ENCODE measurements at regions of chr2 and their contacts with region 1.

Region 1: DNA sequence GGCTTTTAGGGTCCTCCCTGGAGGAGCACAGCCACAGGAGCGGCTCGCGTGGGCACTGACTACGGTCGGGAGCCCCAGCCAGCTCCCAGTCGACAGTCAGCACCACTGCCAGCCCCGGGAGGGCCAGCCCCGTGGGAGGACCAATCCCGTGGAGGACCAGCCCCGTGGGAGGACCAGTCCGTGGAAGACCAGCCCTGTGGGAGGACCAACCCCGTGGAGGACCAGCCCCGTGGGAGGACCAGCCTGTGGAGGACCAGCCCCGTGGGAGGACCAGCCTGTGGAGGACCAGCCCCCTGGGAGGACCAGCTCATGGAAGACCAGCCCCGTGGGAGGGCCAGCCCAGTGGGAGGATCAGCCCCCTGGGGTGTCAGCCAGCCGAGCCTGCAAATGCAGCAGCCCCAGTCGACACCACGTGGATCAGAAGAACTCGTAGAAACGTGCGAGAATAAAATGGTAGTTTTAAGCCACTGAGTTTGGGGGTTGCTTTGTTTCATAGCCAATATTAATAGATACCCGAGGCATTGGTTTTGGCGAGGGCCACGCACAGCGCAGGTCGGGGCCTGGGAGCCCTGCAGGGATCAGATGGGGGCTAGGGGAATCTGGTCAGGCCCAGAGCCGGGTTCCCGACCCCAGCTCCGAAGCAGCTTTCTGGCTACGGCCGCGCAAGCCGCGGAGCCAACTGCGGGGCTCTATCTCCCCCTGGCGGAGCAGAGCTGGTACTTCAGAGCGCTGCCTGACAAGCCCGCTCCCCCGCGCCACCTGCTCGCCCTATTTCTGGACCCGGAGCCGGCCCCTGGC is 73.0 kb downstream of the TEX51 start:
- DNase-seq: peak; percentile 56 to 90
- H3K4me3 ChIP-seq: no peak overlapping the region
- H3K27ac ChIP-seq: no peak overlapping the region
- H3K4me1 ChIP-seq: peaks cover 0 to 17% (median 5%) of the 10 kb centered on the region in 4 experiments; a peak in 5 of 7 replicates
- H3K27me3 ChIP-seq: peaks cover 0 to 9% (median 5%) of the 10 kb centered on the region in 4 experiments; a peak in 3 of 7 replicates
- CTCF ChIP-seq: peak; percentile 87 to 95 (median 89)
- EP300 ChIP-seq: no peak
- POLR2A ChIP-seq: no peak
- RAD21 ChIP-seq: peak; percentile 96 to 99

Region 2: GRCh38 chr2:126776692-126777619 is 194.7 kb before region 1 on chr2:
- CTCF ChIA-PET with region 1: interaction called, 21 read pairs
- POLR2A ChIA-PET with region 1: no interaction called
- DNase-seq: peak; percentile 36 to 94
- H3K4me3 ChIP-seq: peak overlapping the region; percentile 41 to 81 (median 72)
- H3K27ac ChIP-seq: no peak overlapping the region
- H3K4me1 ChIP-seq: peaks cover 0 to 4% (median 2%) of the 10 kb centered on the region in 4 experiments; a peak in 3 of 7 replicates
- H3K27me3 ChIP-seq: peaks cover 0 to 3% (median 1%) of the 10 kb centered on the region in 4 experiments; a peak in 3 of 7 replicates
- CTCF ChIP-seq: peak; percentile 88 to 95 (median 93)
- EP300 ChIP-seq: no peak
- POLR2A ChIP-seq: no peak
- RAD21 ChIP-seq: peak; percentile 98

Region 3: GRCh38 chr2:126839796-126840195 is 131.9 kb before region 1 on chr2:
- CTCF ChIA-PET with region 1: interaction called, 20 read pairs
- POLR2A ChIA-PET with region 1: no interaction called
- DNase-seq: no peak
- H3K4me3 ChIP-seq: no peak overlapping the region
- H3K27ac ChIP-seq: no peak overlapping the region
- H3K4me1 ChIP-seq: no peaks in the 10 kb centered on the region; a peak in 1 of 7 replicates
- H3K27me3 ChIP-seq: peaks cover 0 to 1% (median 0%) of the 10 kb centered on the region in 4 experiments; a peak in 1 of 7 replicates
- CTCF ChIP-seq: no peak
- EP300 ChIP-seq: no peak
- POLR2A ChIP-seq: no peak
- RAD21 ChIP-seq: no peak

Region 4: GRCh38 chr2:126864861-126865260 is 106.8 kb before region 1 on chr2:
- CTCF ChIA-PET with region 1: interaction called, 17 read pairs
- POLR2A ChIA-PET with region 1: no interaction called
- DNase-seq: peak in 1 of 2 experiments; percentile 76
- H3K4me3 ChIP-seq: no peak overlapping the region
- H3K27ac ChIP-seq: no peak overlapping the region
- H3K4me1 ChIP-seq: no peaks in the 10 kb centered on the region; a peak in 1 of 7 replicates
- H3K27me3 ChIP-seq: no peaks in the 10 kb centered on the region
- CTCF ChIP-seq: peak; percentile 58 to 79 (median 69)
- EP300 ChIP-seq: no peak
- POLR2A ChIP-seq: no peak
- RAD21 ChIP-seq: peak; percentile 46 to 66

Region 5: GRCh38 chr2:126954831-126955230 is 16.8 kb before region 1 on chr2:
- CTCF ChIA-PET with region 1: interaction called, 10 read pairs
- POLR2A ChIA-PET with region 1: interaction called, 3 read pairs
- DNase-seq: no peak
- H3K4me3 ChIP-seq: no peak overlapping the region
- H3K27ac ChIP-seq: no peak overlapping the region
- H3K4me1 ChIP-seq: peaks cover 0 to 4% (median 0%) of the 10 kb centered on the region in 4 experiments; a peak in 2 of 7 replicates
- H3K27me3 ChIP-seq: 0 out of 7 replicates have a peak, but pooled peaks cover 0 to 2% (median 0%) of the 10 kb centered on the region in 4 experiments
- CTCF ChIP-seq: no peak
- EP300 ChIP-seq: no peak
- POLR2A ChIP-seq: no peak
- RAD21 ChIP-seq: no peak

Region 6: GRCh38 chr2:127049927-127050802 is 78.5 kb after region 1 on chr2:
- CTCF ChIA-PET with region 1: interaction called, 20 read pairs
- POLR2A ChIA-PET with region 1: no interaction called
- DNase-seq: peak; percentile 41 to 95
- H3K4me3 ChIP-seq: no peak overlapping the region
- H3K27ac ChIP-seq: no peak overlapping the region
- H3K4me1 ChIP-seq: peaks cover 0 to 6% (median 0%) of the 10 kb centered on the region in 4 experiments; a peak in 2 of 7 replicates
- H3K27me3 ChIP-seq: no peaks in the 10 kb centered on the region
- CTCF ChIP-seq: peak in 2 of 3 experiments; percentile 85 to 96; a peak in 3 of 4 replicates
- EP300 ChIP-seq: no peak; a peak in 1 of 3 replicates
- POLR2A ChIP-seq: no peak
- RAD21 ChIP-seq: peak; percentile 82 to 87

Region 7: GRCh38 chr2:127134833-127135830 is 163.5 kb after region 1 on chr2:
- CTCF ChIA-PET with region 1: no interaction called
- POLR2A ChIA-PET with region 1: no interaction called
- DNase-seq: peak in 1 of 2 experiments; percentile 43
- H3K4me3 ChIP-seq: no peak overlapping the region
- H3K27ac ChIP-seq: no peak overlapping the region
- H3K4me1 ChIP-seq: no peaks in the 10 kb centered on the region
- H3K27me3 ChIP-seq: no peaks in the 10 kb centered on the region
- CTCF ChIP-seq: no peak
- EP300 ChIP-seq: no peak
- POLR2A ChIP-seq: no peak
- RAD21 ChIP-seq: no peak

Measured in H1 (cell line).